Colonic mucosa (tissue), 4 donors: ENCODE measurements at regions of chr6 and their contacts with region 1.

Region 1: GRCh38 chr6:17167327-17167979 is 65.6 kb downstream of the STMND1 start:
- DNase-seq: peak; percentile 62
- H3K4me3 ChIP-seq: no peak overlapping the region
- H3K27ac ChIP-seq: no peak overlapping the region
- H3K4me1 ChIP-seq: no peaks in the 10 kb centered on the region
- H3K27me3 ChIP-seq: no peaks in the 10 kb centered on the region
- CTCF ChIP-seq: peak; percentile 35

Region 2: GRCh38 chr6:17250237-17250636 is 82.8 kb after region 1 on chr6:
- intact Hi-C with region 1: no loop called
- DNase-seq: no peak
- H3K4me3 ChIP-seq: no peak overlapping the region
- H3K27ac ChIP-seq: no peak overlapping the region
- H3K4me1 ChIP-seq: no peaks in the 10 kb centered on the region
- H3K27me3 ChIP-seq: no peaks in the 10 kb centered on the region
- CTCF ChIP-seq: no peak

Region 3: GRCh38 chr6:17281100-17281494 is 113.6 kb after region 1 on chr6 and contains the start of gene RBM24:
- intact Hi-C with region 1: loop called (anchors 10 kb)
- DNase-seq: peak; percentile 86
- H3K4me3 ChIP-seq: peak within 1 kb of the TSS; percentile 77
- H3K27ac ChIP-seq: peak within 1 kb of the TSS; percentile 24
- H3K4me1 ChIP-seq: no peaks in the 10 kb centered on the region
- H3K27me3 ChIP-seq: no peaks in the 10 kb centered on the region
- CTCF ChIP-seq: no peak
- total RNA-seq, gene RBM24: 2.8 to 4.9 TPM

Region 4: GRCh38 chr6:17311595-17312311 is 144.3 kb after region 1 on chr6:
- intact Hi-C with region 1: no loop called
- DNase-seq: no peak
- H3K4me3 ChIP-seq: no peak overlapping the region
- H3K27ac ChIP-seq: no peak overlapping the region
- H3K4me1 ChIP-seq: no peaks in the 10 kb centered on the region
- H3K27me3 ChIP-seq: no peaks in the 10 kb centered on the region
- CTCF ChIP-seq: no peak